SK-MEL-5 (cell line): ENCODE measurements at regions of chr7 and their contacts with region 1.

Region 1: GRCh38 chr7:25894902-25895791 is 256.9 kb upstream of the NFE2L3 start:
- DNase-seq: peak; percentile 72

Region 2: DNA sequence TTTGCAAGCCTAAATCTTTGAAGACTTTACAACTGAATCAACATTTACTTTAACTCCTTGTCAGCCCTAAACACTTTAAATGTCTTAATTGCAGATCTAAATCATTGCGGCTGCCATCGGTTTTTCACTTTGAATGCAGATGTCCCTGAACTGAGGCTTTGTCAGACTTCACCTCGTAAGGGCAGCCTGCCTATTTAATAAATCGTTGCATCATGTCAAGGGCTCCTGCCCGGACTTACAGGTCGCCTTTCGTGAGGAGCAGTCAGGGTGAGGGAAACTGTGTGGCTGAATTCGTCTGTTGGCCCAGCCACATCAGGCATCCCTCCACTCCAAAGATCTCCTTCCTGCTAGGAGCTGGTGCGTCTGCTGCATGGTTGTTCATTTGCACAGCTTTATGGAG is 298.7 kb before region 1 on chr7:
- in situ Hi-C with region 1: no loop called
- DNase-seq: no peak

Region 3: GRCh38 chr7:26078437-26079336 is 183.5 kb after region 1 on chr7:
- in situ Hi-C with region 1: loop called (anchors 10 kb)
- DNase-seq: no peak

Region 4: GRCh38 chr7:26199301-26200037 is 304.3 kb after region 1 on chr7:
- in situ Hi-C with region 1: loop called (anchors 10 kb)
- DNase-seq: peak; percentile 91